PC-3 (cell line): ENCODE measurements at regions of chr2 and their contacts with region 1.

Region 1: GRCh38 chr2:182852084-182852483 is 14.4 kb downstream of the FRZB start:
- DNase-seq: peak; percentile 20
- ATAC-seq: no peak
- H3K4me3 ChIP-seq: no peak overlapping the region
- H3K27ac ChIP-seq: no peak overlapping the region
- H3K4me1 ChIP-seq: no peaks in the 10 kb centered on the region
- H3K27me3 ChIP-seq: no peaks in the 10 kb centered on the region
- CTCF ChIP-seq: no peak

Region 2: DNA sequence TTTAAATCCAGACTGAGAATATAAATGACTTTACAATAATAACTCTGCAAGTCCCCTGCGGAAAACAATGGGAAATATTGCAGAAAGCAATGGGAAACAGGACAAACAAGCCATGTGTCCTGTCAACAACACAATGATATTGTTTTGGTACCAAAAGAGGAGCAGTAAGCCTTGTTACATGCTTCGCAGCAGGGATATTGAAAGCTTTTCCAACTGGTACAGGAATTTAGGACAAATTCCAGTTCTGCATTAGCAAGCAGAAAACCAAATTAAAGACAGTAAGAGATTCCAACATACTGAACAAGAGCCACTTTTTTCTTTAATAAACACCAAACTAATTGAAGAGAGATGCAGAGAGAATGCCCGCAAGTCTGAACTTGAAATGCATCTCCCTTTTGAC is 15.6 kb before region 1 on chr2:
- CTCF ChIA-PET with region 1: interaction called, 4 read pairs
- POLR2A ChIA-PET with region 1: interaction called, 11 read pairs
- intact Hi-C with region 1: no loop called
- DNase-seq: no peak
- ATAC-seq: no peak
- H3K4me3 ChIP-seq: no peak overlapping the region
- H3K27ac ChIP-seq: no peak overlapping the region
- H3K4me1 ChIP-seq: no peaks in the 10 kb centered on the region
- H3K27me3 ChIP-seq: peaks cover 68% of the 10 kb centered on the region
- CTCF ChIP-seq: no peak